Activated naive CD4-positive, alpha-beta T cell treated with anti-CD3 and anti-CD28 coated beads for 36 hours (primary cell): ENCODE measurements at regions of chr6 and their contacts with region 1.

Region 1: GRCh38 chr6:73329201-73329600 is 24.9 kb downstream of the DPPA5 start:
- DNase-seq: no peak
- H3K4me3 Mint-ChIP-seq: no peak overlapping the region
- H3K27ac Mint-ChIP-seq: no peak overlapping the region
- H3K4me1 Mint-ChIP-seq: no peaks in the 10 kb centered on the region
- H3K27me3 Mint-ChIP-seq: peaks cover 8% of the 10 kb centered on the region

Region 2: GRCh38 chr6:71533939-71534379 is 1795.2 kb before region 1 on chr6:
- CTCF ChIA-PET with region 1: interaction called, 3 read pairs
- intact Hi-C with region 1: loop called (anchors 5 kb)
- DNase-seq: no peak
- H3K4me3 Mint-ChIP-seq: no peak overlapping the region
- H3K27ac Mint-ChIP-seq: no peak overlapping the region
- H3K4me1 Mint-ChIP-seq: no peaks in the 10 kb centered on the region
- H3K27me3 Mint-ChIP-seq: peaks cover 8% of the 10 kb centered on the region

Region 3: DNA sequence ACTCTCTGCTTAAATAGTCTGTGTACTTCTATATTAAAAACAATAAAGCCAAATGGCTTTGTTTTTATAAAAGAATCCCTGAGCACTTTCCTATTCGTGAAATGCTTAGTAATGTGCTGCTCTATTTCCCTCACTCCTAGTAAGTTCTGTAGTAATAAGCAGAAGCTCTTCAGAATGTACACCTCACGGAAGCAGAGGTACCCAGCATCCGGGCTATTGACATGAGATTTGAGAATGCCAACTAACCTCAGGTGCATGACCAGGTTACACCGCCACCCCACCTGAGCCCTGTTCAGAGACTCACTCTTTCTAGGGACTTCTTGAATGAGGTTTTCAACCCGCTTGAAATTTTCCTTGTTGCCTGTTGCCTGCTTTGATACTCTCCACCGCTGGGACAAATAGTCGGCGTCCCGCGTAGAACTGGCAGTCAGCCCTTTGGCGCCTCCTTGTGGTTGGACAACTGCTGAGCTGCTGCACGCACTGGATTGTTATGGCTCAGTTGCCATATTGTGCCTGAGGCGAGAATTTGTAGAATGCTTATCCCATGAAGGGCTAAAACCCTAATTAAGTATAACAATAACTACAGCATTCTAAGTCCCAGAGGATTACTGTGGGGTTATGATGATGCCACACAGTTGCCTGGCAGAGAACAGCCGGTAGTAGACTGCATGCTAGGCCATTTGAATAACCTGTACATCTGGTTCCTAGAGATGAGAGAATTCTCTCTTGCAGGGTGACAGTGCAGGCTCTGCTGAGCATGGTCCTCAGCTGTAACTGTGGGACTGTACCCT is 199.4 kb before region 1 on chr6:
- CTCF ChIA-PET with region 1: interaction called, 4 read pairs
- intact Hi-C with region 1: loop called (anchors 2 kb)
- DNase-seq: peak; percentile 94
- H3K4me3 Mint-ChIP-seq: peak overlapping the region; percentile 36
- H3K27ac Mint-ChIP-seq: no peak overlapping the region
- H3K4me1 Mint-ChIP-seq: peaks cover 4% of the 10 kb centered on the region
- H3K27me3 Mint-ChIP-seq: no peaks in the 10 kb centered on the region

Region 4: DNA sequence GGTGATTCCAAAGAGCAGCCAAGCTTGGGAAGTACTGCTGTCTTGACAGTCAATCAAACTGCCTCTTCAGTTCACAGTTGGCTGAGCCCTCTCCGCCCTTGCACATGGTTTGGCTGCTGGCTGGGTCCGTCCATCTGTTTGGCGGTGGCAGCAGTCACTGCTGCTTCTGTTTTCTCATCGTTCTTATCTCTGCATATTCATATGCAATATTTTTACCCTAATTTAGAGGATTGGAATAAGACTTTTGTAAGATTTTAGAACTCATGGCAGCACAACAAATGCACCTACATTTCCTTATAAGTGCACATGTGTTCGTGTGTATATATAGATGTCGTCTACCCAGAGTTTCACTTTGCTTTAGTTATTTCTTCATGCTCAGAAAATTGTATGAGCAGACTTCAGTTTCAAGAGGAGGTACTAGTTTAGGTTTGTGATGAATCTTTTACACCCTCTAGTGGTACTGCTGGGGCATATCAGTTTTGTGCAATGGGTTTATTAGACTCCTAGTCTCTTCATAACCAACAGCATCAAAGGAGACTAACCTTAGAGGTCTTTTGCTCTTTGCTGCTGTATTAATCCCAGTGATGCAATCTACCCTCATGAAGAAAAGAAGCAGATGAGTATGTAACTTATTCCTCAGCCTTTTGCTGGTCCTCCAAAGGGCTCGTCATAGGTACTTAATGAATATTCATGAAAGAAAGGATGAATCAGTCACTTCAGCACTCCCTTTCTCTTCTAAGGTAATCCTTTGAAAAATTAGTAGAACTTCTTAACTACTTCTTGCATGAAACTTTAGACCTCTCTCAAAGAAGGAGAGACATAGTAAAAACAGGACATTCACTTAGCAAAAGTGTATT is 148.2 kb before region 1 on chr6:
- CTCF ChIA-PET with region 1: no interaction called
- intact Hi-C with region 1: loop called (anchors 1 kb)
- DNase-seq: peak; percentile 12
- H3K4me3 Mint-ChIP-seq: no peak overlapping the region
- H3K27ac Mint-ChIP-seq: no peak overlapping the region
- H3K4me1 Mint-ChIP-seq: peaks cover 4% of the 10 kb centered on the region
- H3K27me3 Mint-ChIP-seq: no peaks in the 10 kb centered on the region

Region 5: DNA sequence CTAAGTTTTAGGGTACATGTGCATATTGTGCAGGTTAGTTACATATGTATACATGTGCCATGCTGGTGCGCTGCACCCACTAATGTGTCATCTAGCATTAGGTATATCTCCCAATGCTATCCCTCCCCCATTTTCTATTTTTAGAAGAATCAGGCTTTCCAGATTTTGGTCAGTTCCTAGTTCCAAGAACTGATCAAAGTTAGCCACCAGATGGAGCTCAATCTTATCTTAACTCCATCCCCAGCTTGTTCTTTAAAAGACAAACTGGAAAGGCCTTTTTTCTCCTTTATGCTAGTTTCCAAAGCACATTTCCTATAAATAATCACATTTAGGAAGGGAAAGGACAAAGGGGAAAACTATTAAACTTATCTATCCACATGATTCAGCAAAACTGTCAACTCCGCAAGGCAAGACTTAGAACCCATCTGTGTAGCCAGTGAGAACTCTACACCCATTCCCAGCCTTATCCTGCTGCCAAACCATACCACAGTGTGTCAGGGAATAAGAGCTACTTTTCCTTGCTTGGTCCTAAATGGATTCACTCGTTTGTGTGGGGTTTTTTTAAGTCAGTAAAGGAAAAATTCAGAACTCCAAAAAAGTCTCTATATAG is 43.4 kb before region 1 on chr6:
- CTCF ChIA-PET with region 1: interaction called, 13 read pairs
- intact Hi-C with region 1: loop called (anchors 1 kb)
- DNase-seq: no peak
- H3K4me3 Mint-ChIP-seq: no peak overlapping the region
- H3K27ac Mint-ChIP-seq: no peak overlapping the region
- H3K4me1 Mint-ChIP-seq: no peaks in the 10 kb centered on the region
- H3K27me3 Mint-ChIP-seq: no peaks in the 10 kb centered on the region

Region 6: GRCh38 chr6:73309769-73310502 is 19.3 kb before region 1 on chr6:
- CTCF ChIA-PET with region 1: interaction called, 4 read pairs
- intact Hi-C with region 1: loop called (anchors 1 kb)
- DNase-seq: peak; percentile 63
- H3K4me3 Mint-ChIP-seq: peak overlapping the region; percentile 83
- H3K27ac Mint-ChIP-seq: no peak overlapping the region
- H3K4me1 Mint-ChIP-seq: peaks cover 19% of the 10 kb centered on the region
- H3K27me3 Mint-ChIP-seq: peaks cover 53% of the 10 kb centered on the region

Region 7: GRCh38 chr6:73388800-73389512 is 59.8 kb after region 1 on chr6:
- CTCF ChIA-PET with region 1: interaction called, 20 read pairs
- intact Hi-C with region 1: loop called (anchors 2 kb)
- DNase-seq: peak; percentile 64
- H3K4me3 Mint-ChIP-seq: peak overlapping the region; percentile 73
- H3K27ac Mint-ChIP-seq: no peak overlapping the region
- H3K4me1 Mint-ChIP-seq: peaks cover 4% of the 10 kb centered on the region
- H3K27me3 Mint-ChIP-seq: peaks cover 3% of the 10 kb centered on the region